Activated T-helper 1 cell treated with anti-CD3 and anti-CD28 coated beads, Interleukin-12 subunit alpha, Interleukin-12 subunit beta, Interleukin-2, Interleukin-4 antibody, amounts not matched to agents 30 ng/mL and 10 ng/mL and 1 ng/mL, durations not matched to agents 14 hours and 24 hours and 36 hours (primary cell): ENCODE measurements at regions of chr16 and their contacts with region 1.

Region 1: GRCh38 chr16:3059000-3059722 is 6.3 kb upstream of the IL32 start:
- DNase-seq: peak; percentile 88
- H3K4me3 Mint-ChIP-seq: peak overlapping the region; percentile 90
- H3K27ac Mint-ChIP-seq: peak overlapping the region; percentile 93
- H3K4me1 Mint-ChIP-seq: peaks cover 59% of the 10 kb centered on the region
- H3K27me3 Mint-ChIP-seq: peaks cover 2% of the 10 kb centered on the region

Region 2: DNA sequence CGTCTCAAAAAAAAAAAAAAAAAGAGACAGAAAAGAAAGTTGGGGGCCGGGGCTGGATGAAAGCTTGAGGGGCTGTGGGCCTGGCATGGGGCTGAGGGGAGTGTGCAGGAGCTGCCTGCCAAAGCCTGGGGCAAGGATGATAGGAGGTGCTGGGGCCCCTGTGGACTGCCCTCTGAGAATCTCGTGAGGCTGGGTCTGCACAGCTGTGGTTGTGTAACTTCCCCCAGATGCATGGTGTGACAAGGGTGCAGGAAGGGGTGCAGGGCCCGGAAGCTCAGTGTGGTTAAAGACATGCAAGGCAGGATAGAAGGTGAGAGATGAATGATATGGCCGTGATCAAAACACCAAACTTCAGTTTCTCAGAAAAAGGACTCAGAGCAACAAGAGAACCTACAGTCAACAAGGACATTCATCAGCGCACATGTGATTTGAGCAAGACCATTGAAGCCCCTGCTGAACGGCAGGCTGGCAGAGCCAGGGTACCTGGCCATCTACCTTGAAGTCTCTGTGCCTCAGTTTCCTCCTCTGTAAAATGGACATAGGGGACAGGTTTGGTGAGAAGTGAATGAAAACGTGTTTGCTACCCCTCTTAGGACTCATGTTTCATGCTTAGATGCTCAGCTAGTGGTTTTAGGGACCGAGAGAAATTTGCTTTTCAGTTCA is 15.8 kb after region 1 on chr16:
- intact Hi-C with region 1: loop called (anchors 2 kb)
- DNase-seq: peak; percentile 85
- H3K4me3 Mint-ChIP-seq: peak overlapping the region; percentile 84
- H3K27ac Mint-ChIP-seq: peak overlapping the region; percentile 100
- H3K4me1 Mint-ChIP-seq: peaks cover 80% of the 10 kb centered on the region
- H3K27me3 Mint-ChIP-seq: peaks cover 2% of the 10 kb centered on the region

Region 3: DNA sequence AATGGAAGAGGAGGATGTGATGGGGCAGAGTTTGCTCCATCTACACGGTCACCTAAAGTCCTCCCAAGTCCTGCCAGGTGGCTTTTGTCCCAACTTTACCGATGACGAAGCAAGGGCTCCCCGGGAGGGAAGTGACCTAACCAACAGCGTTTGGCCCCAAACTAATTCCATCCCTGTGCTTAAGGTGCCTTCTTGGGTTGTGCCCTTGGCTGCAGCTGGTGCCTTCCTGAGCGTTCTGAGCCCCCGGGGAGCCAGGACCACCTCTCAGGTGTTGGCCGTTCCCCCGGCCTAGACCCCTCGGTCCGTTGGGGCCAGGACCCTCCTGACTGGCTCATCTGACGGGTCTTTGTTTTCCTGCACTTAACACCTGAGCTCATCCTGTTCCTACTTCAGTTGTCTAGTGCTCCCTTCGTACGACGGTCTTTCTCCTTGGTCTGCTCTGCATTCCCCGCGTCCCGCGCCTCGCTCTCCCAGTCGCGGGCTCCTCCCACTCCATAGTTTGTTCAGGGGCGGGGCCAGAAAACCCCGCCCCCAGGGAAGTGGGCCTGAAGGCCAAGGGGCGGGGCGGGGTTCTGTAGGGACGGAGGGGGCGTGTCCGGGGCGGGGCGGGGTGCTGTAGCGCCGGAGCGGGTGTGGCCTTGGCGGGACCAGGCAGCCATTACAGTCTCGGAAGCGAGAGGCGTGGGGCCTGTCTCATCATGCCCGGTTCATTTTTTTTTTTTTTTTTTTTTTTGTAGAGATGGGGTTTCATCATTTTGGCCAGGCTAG is 40.8 kb after region 1 on chr16:
- intact Hi-C with region 1: loop called (anchors 1 kb)
- DNase-seq: peak; percentile 87
- H3K4me3 Mint-ChIP-seq: peak overlapping the region; percentile 69
- H3K27ac Mint-ChIP-seq: peak overlapping the region; percentile 78
- H3K4me1 Mint-ChIP-seq: peaks cover 32% of the 10 kb centered on the region
- H3K27me3 Mint-ChIP-seq: no peaks in the 10 kb centered on the region

Region 4: GRCh38 chr16:3123986-3124886 is 65.1 kb after region 1 on chr16:
- intact Hi-C with region 1: loop called (anchors 1 kb)
- DNase-seq: peak; percentile 96
- H3K4me3 Mint-ChIP-seq: peak overlapping the region; percentile 97
- H3K27ac Mint-ChIP-seq: peak overlapping the region; percentile 93
- H3K4me1 Mint-ChIP-seq: peaks cover 42% of the 10 kb centered on the region
- H3K27me3 Mint-ChIP-seq: peaks cover 3% of the 10 kb centered on the region

Region 5: GRCh38 chr16:3166510-3166895 is 107.3 kb after region 1 on chr16:
- intact Hi-C with region 1: loop called (anchors 1 kb)
- DNase-seq: no peak
- H3K4me3 Mint-ChIP-seq: no peak overlapping the region
- H3K27ac Mint-ChIP-seq: no peak overlapping the region
- H3K4me1 Mint-ChIP-seq: peaks cover 28% of the 10 kb centered on the region
- H3K27me3 Mint-ChIP-seq: peaks cover 33% of the 10 kb centered on the region